Prostate gland (tissue), 2 donors: ENCODE measurements at regions of chr20 and their contacts with region 1.

Region 1: DNA sequence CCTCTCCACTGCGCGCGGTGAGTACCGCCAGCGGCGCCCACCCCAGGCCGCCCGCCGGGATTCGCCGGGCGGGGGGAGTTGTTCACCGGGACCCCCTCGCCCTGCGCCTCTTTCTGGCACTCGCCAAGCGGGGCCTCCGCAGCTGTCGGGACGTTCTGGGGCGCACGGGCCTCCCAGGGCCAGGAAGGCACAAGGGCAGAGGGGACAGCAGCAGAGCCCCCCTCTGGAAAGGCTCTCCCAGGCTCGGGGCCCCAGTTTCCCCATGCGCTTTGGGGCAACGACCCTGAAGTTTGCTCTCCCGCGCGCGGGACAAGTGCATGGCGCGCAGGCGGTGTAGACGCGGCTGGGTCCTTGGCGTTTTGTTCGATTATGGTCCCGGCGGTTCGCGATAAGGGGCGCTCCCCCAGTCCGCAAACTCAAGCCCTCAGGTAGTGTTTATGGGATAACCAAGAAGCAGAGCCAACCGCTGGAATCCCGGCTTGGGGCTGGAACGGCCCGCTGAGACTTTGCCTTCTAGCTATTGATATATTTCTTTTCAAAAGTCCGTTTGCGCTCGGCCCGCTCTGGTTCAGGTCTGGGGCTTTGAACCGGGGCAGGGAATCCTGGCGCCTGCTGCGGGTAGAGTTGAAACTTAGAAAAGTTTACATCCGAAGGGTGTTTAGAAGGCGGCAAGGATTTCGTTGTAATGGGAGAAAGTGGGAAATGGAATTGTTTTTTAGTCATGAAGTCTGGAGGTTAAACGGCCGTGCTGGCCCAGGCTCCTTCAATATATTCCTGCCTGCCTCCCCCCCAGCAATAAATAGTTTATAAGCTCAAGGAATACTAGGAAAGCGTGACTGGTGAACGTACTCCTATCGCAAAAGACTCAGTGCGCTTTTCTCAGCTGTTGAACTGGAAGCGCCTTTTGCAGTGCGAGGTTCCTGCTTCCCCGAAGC is 595 bp downstream of the EYA2 start:
- DNase-seq: peak; percentile 71
- H3K4me3 ChIP-seq: peak overlapping the region; percentile 77 to 83
- H3K27ac ChIP-seq: peak overlapping the region; percentile 91 to 93
- H3K4me1 ChIP-seq: no peaks in the 10 kb centered on the region
- H3K27me3 ChIP-seq: no peaks in the 10 kb centered on the region
- CTCF ChIP-seq: no peak
- POLR2A ChIP-seq: peak; percentile 44

Region 2: GRCh38 chr20:46928580-46929132 is 33.4 kb after region 1 on chr20:
- intact Hi-C with region 1: no loop called
- DNase-seq: no peak
- H3K4me3 ChIP-seq: no peak overlapping the region
- H3K27ac ChIP-seq: peak overlapping the region; percentile 28
- H3K4me1 ChIP-seq: peaks cover 2% of the 10 kb centered on the region
- H3K27me3 ChIP-seq: no peaks in the 10 kb centered on the region
- CTCF ChIP-seq: no peak
- POLR2A ChIP-seq: no peak

Region 3: GRCh38 chr20:46939031-46939965 is 44.1 kb after region 1 on chr20:
- intact Hi-C with region 1: loop called (anchors 5 kb)
- DNase-seq: no peak
- H3K4me3 ChIP-seq: no peak overlapping the region
- H3K27ac ChIP-seq: no peak overlapping the region
- H3K4me1 ChIP-seq: peaks cover 3% of the 10 kb centered on the region
- H3K27me3 ChIP-seq: no peaks in the 10 kb centered on the region
- CTCF ChIP-seq: no peak
- POLR2A ChIP-seq: no peak

Region 4: DNA sequence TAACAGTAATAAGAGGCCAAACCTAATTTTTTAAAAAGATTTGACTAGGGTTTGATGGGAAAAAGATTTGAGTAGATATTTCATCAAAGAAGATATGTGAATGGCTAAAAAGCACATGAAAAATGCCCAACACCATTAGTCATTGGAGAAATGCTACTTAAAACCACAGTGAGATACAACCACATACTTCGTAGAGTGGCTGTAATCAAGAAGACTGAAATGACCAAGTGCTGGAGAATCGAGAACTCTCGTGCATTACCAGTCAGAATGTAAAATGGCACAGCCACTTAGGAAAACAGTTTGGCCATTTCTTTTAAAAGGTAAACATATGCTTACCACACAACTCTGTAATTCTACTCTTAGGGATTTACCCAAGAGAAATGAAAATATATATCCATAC is 174.9 kb after region 1 on chr20:
- intact Hi-C with region 1: no loop called
- DNase-seq: no peak
- H3K4me3 ChIP-seq: no peak overlapping the region
- H3K27ac ChIP-seq: no peak overlapping the region
- H3K4me1 ChIP-seq: no peaks in the 10 kb centered on the region
- H3K27me3 ChIP-seq: no peaks in the 10 kb centered on the region
- CTCF ChIP-seq: no peak
- POLR2A ChIP-seq: no peak

Region 5: GRCh38 chr20:47125583-47126373 is 230.5 kb after region 1 on chr20:
- intact Hi-C with region 1: loop called (anchors 10 kb)
- DNase-seq: peak; percentile 74
- H3K4me3 ChIP-seq: no peak overlapping the region
- H3K27ac ChIP-seq: peak overlapping the region; percentile 70 to 72
- H3K4me1 ChIP-seq: peaks cover 8% of the 10 kb centered on the region
- H3K27me3 ChIP-seq: no peaks in the 10 kb centered on the region
- CTCF ChIP-seq: peak in 1 of 4 experiments; percentile 26
- POLR2A ChIP-seq: peak; percentile 9